IMR-90 (cell line): ENCODE measurements at regions of chr1 and their contacts with region 1.

Region 1: DNA sequence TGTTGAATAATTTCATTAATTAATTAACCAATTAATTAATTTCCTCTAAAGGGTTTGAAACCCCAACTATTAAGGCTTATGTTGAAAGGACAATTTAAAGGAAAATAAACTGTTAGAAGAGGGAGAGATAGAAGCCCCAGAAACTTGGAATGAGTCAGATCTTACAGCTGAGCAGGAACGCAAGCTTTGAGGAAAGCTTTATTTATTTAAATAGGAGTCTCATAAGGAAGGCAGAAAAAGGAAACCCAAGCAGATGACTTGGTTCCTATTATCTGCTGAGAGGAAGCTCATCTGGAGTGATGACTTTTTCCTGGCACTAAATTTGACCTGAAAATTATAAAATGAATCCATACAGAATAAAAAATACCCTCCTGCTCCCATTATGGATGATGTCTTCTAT is 105.1 kb downstream of the ROR1 start:
- DNase-seq: peak; percentile 83
- ATAC-seq: peak; percentile 84
- H3K4me3 ChIP-seq: no peak overlapping the region
- H3K27ac ChIP-seq: peak overlapping the region; percentile 11; the same call in 1 of the 2 replicates
- H3K4me1 ChIP-seq: peaks cover 22% of the 10 kb centered on the region
- H3K27me3 ChIP-seq: no peaks in the 10 kb centered on the region
- CTCF ChIP-seq: no peak
- POLR2A ChIP-seq: no peak
- RAD21 ChIP-seq: no peak

Region 2: GRCh38 chr1:63868268-63868781 is 10.6 kb before region 1 on chr1:
- CTCF ChIA-PET with region 1: interaction called, 4 read pairs
- POLR2A ChIA-PET with region 1: interaction called, 11 read pairs
- dilution Hi-C with region 1: no loop called
- in situ Hi-C with region 1: no loop called
- intact Hi-C with region 1: no loop called
- DNase-seq: peak; percentile 55
- ATAC-seq: no peak; the same call in 1 of the 2 replicates
- H3K4me3 ChIP-seq: no peak overlapping the region
- H3K27ac ChIP-seq: no peak overlapping the region
- H3K4me1 ChIP-seq: no peaks in the 10 kb centered on the region; the same call in 1 of the 2 replicates
- H3K27me3 ChIP-seq: no peaks in the 10 kb centered on the region; the same call in 1 of the 2 replicates
- CTCF ChIP-seq: no peak
- POLR2A ChIP-seq: no peak
- RAD21 ChIP-seq: no peak